Posterior vena cava (tissue), 2 donors: ENCODE measurements at regions of chr2 and their contacts with region 1.

Region 1: DNA sequence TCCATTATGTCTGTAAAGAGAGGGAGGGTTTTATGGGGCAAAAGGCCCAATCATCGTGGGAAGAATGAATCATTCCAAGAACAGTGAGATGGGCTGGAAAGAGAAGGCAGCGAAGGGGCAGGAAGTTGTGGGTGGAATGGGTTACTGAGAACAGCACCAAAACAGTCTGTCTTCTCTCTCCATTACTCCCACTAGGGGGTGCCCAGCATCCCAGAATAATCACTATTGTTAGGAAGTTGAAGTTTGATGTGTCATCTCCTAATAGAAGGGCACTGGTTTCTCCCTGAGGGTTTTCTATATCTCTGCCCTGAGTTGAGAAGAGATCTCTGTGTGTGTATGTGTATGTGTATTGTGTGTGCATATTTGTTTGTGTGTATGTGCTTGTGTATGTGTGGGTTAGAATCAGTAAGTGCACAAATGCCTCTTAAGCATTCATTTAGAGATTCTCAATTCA is 76.6 kb upstream of the MAP4K3 start:
- DNase-seq: no peak

Region 2: DNA sequence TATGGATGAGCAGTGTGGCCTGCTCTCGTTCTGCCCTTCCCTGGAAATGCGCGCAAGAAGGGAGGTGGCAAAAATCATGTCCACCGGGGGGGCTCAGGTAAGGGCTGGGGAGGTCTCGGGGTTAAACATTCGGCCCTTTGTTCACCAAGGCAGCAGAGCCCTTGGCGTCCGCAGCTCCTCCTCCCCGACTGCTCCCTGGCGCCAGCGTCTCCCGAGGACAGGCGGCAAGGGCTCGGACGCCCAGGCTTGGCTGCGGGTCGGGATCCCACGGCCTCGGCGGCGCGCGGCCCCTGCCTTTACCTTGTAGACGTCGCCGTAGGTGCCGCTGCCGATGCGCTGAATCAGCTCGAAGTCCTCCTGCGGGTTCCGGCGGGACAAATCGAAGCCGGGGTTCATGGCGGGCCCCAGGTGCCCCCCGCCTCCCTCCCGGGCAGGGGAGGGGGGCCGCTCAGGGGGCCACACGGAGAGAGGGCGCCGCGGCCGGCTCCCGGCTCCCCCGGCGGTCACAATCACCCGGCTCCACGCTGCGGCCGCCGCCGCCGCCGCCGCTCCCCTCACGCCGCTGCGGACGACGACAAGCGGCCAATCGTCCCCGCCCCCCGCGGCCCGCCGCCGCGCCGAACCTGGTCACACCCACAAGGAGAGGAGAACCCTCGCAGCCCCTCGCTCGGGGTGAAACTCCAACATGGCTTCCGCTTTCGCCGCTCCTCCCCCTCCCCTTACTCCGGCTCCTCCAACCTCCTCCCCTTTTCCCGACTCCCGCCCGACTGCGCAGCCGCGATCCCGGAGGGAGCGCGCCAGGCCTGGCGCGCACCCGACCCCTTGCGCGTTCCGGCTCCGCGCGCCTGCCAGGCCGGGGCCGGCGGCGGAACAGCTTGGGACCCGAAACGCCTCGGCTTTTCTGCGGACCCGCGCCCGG is 76.8 kb before region 1 on chr2 and contains the start of gene MAP4K3:
- intact Hi-C with region 1: loop called in 1 of 2 experiments (anchors 5 kb)
- DNase-seq: peak; percentile 96
- total RNA-seq, gene MAP4K3: 24.7 to 47.4 TPM

Region 3: DNA sequence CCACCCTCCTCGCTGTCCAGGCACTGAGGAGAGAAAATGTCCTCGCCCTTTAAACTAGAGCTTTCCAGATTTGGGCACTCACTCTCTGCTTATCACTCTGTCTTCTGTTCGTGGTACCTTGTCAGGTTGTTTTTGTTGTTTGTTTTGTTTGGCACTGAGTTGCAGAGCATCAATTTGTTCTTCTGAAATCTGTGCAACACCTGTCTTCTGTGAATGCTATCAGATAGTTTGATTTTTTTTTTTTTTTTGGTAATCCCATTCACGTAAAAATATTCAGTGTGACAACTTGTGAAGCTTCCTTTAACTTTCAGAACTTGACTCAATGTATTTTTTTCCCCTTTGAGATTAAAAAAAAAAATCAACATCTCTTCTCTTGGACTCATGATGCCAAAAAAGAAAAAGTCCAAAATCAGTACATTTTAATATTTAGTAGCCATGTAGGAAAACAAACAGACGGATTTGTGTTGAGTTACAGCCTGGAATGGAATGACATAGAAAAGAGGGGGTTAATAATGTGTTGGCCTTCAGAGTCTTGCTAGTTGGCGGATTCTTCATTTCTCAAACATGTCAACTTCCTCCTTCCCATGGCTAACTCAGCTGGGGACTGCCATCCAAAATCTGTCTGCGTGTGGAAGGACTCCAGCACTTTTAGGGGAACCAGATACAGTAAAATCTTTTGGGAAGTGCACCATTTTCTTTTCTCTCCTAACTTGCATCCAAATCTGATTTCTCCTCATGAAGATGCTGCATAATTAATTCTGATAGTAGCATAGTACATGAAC is 153.6 kb after region 1 on chr2:
- intact Hi-C with region 1: no loop called
- DNase-seq: no peak